Activated T-helper 2 cell treated with anti-CD3 and anti-CD28 coated beads, Interferon-gamma antibody, Interleukin-2, Interleukin-4, amounts not matched to agents 10 μg/mL and 5 μg/mL and 100 μg/mL, durations not matched to agents 14 hours and 24 hours and 36 hours (primary cell): ENCODE measurements at regions of chr9 and their contacts with region 1.

Region 1: DNA sequence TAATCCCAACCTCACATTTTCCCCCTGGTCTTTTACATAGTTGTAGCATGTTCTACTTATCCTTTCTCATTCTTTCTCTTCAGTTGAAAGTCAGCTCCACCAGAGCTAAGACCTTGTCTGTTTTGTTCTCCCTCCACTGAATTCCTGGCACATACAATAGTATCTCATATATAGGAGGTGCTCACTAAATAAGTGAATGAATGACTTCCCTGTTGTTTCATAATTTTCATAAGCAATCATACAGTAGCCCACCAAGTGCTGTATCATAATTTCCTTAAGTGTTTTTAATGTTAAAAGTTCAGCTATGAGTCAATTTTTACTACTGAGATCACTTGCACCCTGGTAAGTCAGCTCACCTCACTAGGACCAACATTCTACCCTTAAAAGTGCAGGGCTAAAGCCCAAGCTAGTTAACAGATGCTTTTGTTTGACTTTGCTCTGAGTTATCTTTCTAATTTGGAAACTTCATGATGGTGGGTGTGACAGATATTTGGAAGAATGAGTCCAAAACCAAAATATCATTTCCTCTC is 27.6 kb downstream of the TMEM245 start:
- DNase-seq: no peak
- H3K4me3 Mint-ChIP-seq: no peak overlapping the region
- H3K27ac Mint-ChIP-seq: peak overlapping the region; percentile 77
- H3K4me1 Mint-ChIP-seq: peaks cover 49% of the 10 kb centered on the region
- H3K27me3 Mint-ChIP-seq: no peaks in the 10 kb centered on the region

Region 2: GRCh38 chr9:109110326-109111021 is 18.4 kb after region 1 on chr9:
- intact Hi-C with region 1: loop called (anchors 2 kb)
- DNase-seq: no peak
- H3K4me3 Mint-ChIP-seq: peak overlapping the region; percentile 54
- H3K27ac Mint-ChIP-seq: peak overlapping the region; percentile 79
- H3K4me1 Mint-ChIP-seq: peaks cover 62% of the 10 kb centered on the region
- H3K27me3 Mint-ChIP-seq: no peaks in the 10 kb centered on the region

Region 3: GRCh38 chr9:109119439-109120203 is 27.5 kb after region 1 on chr9 and contains the start of gene TMEM245:
- intact Hi-C with region 1: loop called (anchors 1 kb)
- DNase-seq: peak; percentile 93
- H3K4me3 Mint-ChIP-seq: peak within 1 kb of the TSS; percentile 84
- H3K27ac Mint-ChIP-seq: peak within 1 kb of the TSS; percentile 83
- H3K4me1 Mint-ChIP-seq: peaks cover 36% of the 10 kb centered on the region
- H3K27me3 Mint-ChIP-seq: no peaks in the 10 kb centered on the region
- total RNA-seq, gene TMEM245: 24.0 and 25.8 TPM in 2 replicates

Region 4: GRCh38 chr9:109182940-109183798 is 91.1 kb after region 1 on chr9:
- intact Hi-C with region 1: loop called (anchors 1 kb)
- DNase-seq: peak; percentile 11
- H3K4me3 Mint-ChIP-seq: no peak overlapping the region
- H3K27ac Mint-ChIP-seq: no peak overlapping the region
- H3K4me1 Mint-ChIP-seq: peaks cover 9% of the 10 kb centered on the region
- H3K27me3 Mint-ChIP-seq: peaks cover 15% of the 10 kb centered on the region